ENCODE measurements at regions of chr17 and their contacts with region 1.

Region 1: DNA sequence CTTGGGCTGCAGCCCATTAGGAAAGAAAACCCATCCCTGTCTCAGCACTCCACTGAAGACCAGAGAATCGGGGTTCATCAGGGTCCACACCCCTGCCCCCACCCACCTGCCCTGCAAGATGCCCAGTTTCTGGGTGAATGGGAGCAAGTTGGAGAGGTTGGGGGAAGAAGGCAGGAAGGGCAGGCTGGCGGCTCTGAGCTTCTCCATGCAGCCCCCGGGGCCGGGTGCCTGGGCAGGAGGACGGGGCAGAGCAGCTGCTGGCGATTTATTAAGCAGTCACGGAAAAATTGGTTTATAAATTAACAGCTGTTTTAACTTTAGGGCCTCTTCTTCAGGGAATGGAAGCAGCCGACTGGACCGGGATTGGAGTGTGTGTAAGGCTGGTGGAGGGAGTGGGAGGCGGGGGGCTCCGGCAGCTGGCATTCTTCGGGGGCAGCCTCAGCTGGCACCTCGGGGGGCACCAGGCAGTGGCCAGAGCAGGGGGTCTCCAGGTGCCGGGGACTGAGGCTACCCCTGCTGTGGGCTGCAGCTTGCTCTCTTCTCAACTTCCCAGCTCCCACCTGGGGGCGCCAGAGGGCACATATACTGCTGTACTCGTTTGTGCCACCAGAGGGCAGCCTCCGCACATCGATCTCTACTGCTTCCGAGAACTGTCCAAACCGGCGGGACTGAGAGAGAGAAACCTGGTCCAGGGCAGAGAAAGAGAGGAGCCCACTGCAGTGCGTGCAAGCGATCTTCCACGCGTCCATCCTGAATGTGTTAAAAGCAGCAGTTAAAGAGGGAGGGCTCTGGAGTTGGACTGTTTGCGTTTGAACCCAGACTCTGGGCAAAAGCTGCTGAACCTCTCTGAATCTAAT is 5.0 kb upstream of the PPP1R1B start:
- DNase-seq: peak; percentile 91
- ATAC-seq: peak; percentile 79

Region 2: DNA sequence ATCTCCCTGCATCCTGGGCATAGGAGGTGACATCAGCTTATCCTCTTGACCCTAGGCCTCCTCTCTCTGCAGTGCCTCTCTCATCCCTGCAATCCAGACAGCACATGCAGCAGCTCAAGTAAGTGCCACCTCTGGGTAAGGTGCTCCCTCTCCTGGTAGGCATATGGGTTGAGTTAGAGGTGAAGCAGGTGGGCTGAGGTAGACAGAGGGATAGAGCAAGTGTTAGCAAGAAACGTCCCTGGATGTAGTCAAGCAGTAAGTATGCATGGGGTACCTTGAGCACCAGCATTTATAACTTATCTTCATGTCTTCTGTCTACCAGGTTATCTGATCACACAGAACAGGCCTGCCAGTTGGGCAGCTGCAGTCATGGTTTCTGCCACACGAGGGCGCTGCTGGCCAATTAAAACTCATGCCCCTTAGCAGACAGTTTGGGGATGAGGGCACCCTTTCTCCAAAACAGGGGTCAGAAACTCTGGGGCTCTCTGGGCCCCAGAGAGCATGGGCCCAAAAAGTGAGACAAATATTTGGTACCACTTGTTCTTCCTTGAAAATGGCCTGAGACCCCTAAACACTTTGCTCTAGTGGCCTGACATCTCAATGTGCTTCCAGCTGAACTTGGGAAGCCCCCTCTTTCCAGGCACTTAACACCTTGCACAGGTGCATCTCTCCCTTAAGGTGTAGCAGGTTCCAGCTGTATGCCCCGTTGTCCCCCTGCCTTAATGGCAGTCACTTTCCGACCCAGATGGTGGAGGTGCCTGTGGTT is 73.9 kb before region 1 on chr17:
- intact Hi-C with region 1: loop called (anchors 5 kb)
- DNase-seq: peak; percentile 82
- ATAC-seq: peak; percentile 85

Region 3: GRCh38 chr17:39573447-39574298 is 48.1 kb before region 1 on chr17:
- intact Hi-C with region 1: no loop called
- DNase-seq: peak; percentile 84
- ATAC-seq: peak; percentile 97

Region 4: DNA sequence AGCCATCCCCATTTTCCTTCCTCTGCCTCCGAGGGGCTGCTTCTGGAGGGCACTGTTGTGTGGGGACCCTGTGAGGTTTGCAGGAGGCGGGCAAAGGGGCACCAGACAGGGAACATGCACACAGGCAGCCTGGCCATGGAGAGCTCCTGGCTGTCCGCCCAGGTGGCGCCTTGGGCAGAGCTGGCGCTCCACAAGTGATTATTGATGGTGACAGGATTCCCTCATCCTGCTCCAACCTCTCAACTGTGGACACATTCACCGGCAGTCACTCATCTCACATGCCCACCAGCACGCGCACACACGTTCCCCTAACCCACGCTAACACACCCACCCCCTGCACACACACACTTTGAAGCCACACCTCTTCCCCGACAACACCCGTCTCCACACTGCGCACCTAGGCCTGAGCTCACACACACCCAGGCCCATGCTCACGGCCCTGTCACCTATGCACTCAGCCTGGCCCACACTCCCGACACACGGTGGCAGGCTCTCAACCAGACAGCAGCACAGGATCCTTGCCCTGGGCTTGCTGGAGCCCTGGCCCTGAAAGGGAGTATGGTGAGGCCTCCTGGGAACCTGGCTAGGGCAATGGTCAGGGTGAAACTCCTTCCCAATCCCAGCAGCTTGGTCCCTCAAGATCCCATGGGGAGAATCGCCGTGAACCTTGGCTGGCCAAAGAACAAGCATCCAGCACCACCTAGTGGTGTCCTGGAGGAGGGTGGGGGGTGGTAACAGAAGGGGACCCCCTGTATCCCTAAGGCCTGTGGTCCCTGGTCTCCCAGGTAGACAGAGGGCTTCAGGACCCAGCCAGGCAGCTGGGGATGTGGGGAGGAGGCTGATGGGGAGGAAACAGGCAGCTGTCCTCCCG is 50.1 kb after region 1 on chr17:
- intact Hi-C with region 1: no loop called
- DNase-seq: peak; percentile 89
- ATAC-seq: peak; percentile 29

Region 5: GRCh38 chr17:39754161-39754951 is 132.6 kb after region 1 on chr17:
- intact Hi-C with region 1: loop called (anchors 5 kb)
- DNase-seq: peak; percentile 96
- ATAC-seq: peak; percentile 92

Measured in left ventricle myocardium superior (tissue), 1 donor.